Activated CD8-positive, alpha-beta memory T cell treated with anti-CD3 and anti-CD28 coated beads, Interleukin-2, amount 10 ng/mL, durations not matched to agents 7 days and 5 days (primary cell): ENCODE measurements at regions of chr20 and their contacts with region 1.

Region 1: DNA sequence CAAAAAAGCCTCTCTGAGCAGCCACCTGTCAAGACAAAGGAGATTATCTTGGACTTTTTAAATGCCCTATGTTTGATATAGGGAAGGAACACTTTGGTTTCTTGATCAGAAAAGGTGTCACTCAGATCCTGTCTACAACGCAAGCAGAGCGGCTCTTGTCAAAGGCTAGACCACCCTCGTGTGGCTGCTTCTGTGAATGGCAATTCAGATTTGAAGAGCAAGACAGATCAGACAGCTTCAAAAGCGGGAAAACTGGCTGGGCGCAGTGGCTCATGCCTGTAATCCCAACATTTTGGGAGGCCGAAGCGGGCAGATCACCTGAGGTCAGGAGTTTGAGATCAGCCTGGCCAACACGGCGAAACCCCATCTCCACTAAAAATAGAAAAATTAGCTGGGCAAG is 10.1 kb upstream of the NXT1 start:
- DNase-seq: peak; percentile 60
- ATAC-seq: no peak
- H3K4me3 Mint-ChIP-seq: no peak overlapping the region
- H3K27ac Mint-ChIP-seq: no peak overlapping the region
- H3K4me1 Mint-ChIP-seq: peaks cover 6% of the 10 kb centered on the region
- H3K27me3 Mint-ChIP-seq: no peaks in the 10 kb centered on the region

Region 2: DNA sequence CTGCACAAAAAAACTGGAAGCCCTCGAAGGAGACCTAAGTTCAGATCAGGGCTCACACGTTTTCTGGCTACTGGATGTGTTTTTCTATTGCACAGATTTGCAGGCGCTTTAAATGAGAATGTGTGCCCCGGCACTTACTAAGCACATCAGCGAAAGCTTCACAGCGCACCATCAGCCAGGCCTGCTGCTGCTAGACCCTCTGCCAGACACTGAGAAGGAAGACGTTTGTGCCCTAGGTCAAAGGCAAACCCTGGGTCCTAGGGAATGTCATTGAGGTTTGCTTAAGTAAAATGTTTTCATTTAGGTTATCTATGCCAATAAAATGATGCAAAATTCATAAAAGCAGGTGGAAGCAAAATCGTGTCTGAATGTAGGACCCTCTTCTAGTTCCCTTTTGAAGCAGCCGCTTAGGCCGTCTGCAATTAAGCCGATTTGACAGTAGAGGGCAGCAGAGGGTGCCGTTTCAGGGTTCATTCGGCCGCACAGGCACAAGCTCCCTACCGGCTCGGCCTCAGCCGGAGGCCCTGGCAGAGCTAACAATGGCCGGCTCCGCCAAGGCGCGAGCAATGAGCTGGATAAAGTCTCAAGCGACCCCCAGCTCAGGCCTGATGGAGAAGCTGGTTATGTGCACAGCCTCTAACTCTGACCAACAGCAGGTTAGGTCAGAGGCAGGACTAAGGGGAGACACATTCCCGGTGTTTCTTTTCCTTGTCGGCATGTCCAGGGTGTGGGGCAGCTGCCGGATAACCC is 649.0 kb before region 1 on chr20:
- CTCF ChIA-PET with region 1: interaction called, 17 read pairs
- DNase-seq: peak; percentile 50
- ATAC-seq: peak; percentile 45
- H3K4me3 Mint-ChIP-seq: no peak overlapping the region
- H3K27ac Mint-ChIP-seq: no peak overlapping the region
- H3K4me1 Mint-ChIP-seq: no peaks in the 10 kb centered on the region
- H3K27me3 Mint-ChIP-seq: no peaks in the 10 kb centered on the region

Region 3: DNA sequence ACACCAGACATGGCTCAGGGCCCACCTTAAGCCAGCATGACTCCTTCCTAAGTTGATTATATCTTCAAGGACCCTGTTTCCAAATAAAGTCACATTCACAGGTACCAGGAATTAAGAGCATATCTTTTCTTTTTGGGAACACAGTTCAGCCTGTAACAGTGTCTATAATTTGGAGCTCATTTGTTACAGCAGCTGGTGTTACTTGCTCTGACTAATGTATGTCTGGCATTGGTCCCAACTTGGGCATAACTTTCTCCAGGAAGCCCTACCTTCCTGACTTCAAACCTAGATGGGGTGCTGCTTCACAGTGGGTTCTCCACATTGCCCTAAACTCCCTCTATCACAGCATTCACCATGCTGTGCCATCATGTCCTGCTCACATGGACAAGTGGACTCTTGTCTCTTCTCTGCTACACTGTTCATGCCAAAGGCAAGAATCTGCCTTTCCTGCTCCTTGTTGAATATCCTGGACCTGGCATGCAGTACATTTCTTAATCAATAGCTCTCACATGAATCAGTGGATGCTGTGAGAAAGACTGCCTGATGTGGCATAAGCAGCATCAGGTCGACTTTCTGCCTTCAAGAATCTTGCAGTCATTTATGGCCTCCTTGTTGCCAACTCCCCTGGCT is 638.7 kb before region 1 on chr20:
- CTCF ChIA-PET with region 1: no interaction called
- DNase-seq: no peak
- ATAC-seq: no peak
- H3K4me3 Mint-ChIP-seq: no peak overlapping the region
- H3K27ac Mint-ChIP-seq: no peak overlapping the region
- H3K4me1 Mint-ChIP-seq: no peaks in the 10 kb centered on the region
- H3K27me3 Mint-ChIP-seq: no peaks in the 10 kb centered on the region

Region 4: GRCh38 chr20:23283096-23283850 is 57.3 kb before region 1 on chr20:
- CTCF ChIA-PET with region 1: no interaction called
- DNase-seq: no peak
- ATAC-seq: no peak
- H3K4me3 Mint-ChIP-seq: no peak overlapping the region
- H3K27ac Mint-ChIP-seq: no peak overlapping the region
- H3K4me1 Mint-ChIP-seq: no peaks in the 10 kb centered on the region
- H3K27me3 Mint-ChIP-seq: peaks cover 2% of the 10 kb centered on the region

Region 5: DNA sequence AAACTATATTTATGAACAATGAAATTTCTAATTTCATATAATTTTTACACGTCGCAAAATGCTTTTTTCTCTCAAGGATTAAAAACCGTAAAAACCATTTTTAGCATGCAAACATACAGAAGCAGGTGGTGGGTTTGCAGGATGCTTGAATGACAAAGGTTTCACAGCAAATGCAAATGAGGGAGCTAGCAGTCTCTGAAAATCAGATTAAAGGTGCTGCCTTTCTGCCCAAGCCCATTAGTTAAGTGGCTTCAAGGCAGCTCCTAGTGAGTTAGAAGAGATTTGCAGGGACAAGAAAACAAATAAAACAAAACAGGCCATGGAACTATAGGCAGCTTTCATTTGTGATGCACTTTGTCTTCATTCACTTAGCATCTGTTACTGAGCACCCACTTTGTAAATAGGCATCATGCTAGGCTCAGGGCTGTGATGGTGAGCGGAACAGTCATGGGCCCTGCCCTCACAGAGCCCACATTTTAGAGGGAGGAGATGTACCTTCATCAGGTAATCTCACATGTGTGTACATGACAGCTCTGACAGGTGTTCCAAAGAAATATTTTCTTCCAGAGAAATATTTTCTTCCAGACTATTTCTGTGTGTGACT is 51.3 kb after region 1 on chr20:
- CTCF ChIA-PET with region 1: no interaction called
- DNase-seq: no peak
- ATAC-seq: no peak
- H3K4me3 Mint-ChIP-seq: no peak overlapping the region
- H3K27ac Mint-ChIP-seq: no peak overlapping the region
- H3K4me1 Mint-ChIP-seq: peaks cover 8% of the 10 kb centered on the region
- H3K27me3 Mint-ChIP-seq: no peaks in the 10 kb centered on the region

Region 6: DNA sequence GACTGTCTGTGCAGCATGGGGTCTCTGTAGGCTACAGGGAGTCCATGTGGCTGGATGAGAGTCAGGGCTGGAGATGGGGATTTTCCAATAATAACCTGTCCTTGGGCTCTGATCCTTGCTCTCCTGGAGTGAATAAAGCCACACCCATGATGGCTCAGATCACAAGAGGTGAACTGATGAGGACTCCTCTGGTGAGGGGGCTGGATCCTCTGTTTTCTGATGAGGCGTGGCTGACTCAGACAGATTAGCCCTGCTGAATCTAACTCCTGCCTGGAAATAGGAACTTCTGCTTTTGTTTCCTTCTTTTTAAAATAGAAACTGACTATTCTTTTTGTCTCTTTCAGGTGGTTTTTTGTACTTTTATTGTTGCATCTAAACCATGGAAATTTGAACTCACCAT is 200.8 kb after region 1 on chr20:
- CTCF ChIA-PET with region 1: no interaction called
- DNase-seq: no peak
- ATAC-seq: no peak
- H3K4me3 Mint-ChIP-seq: no peak overlapping the region
- H3K27ac Mint-ChIP-seq: no peak overlapping the region
- H3K4me1 Mint-ChIP-seq: no peaks in the 10 kb centered on the region
- H3K27me3 Mint-ChIP-seq: peaks cover 6% of the 10 kb centered on the region